Heart left ventricle (tissue), 16 donors: ENCODE measurements at regions of chr10 and their contacts with region 1.

Region 1: DNA sequence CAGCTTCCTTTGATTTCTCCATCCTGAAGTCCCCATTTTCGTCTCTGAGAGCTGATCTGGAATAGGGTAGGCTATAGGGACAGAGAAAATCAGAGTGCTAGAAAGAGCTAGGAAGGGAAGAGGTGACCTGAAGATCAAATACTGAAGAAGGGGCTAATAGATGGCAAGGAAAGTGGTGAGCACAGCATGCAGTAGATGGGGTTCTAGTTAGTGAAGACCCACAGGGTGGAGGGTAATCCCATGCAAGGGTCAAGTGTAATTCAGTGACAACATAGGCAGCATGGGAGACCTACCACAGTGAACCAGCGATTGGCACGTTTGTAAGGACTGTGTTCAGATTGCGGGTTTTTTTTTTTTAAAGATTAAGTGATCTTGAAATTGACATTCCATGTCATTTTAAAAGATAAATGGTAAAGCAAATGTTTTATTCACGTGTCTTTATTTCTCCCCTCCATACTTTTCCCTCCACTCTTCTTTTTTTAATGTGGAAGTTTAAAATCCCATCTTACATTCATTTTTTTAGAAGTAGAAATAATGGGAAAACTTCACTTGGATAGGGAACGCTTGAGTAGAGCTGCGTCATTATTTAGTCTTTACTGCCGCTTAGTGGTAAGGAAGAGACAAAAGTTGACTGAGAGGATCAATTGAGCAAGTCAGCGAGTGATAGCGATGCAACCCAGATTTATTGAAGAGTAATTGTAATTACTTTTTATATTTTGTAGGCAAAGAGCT is 21.0 kb upstream of the ABI1 start:
- DNase-seq: no peak
- ATAC-seq: peak in 3 of 4 donors; percentile 80 to 84 (median 82)
- H3K4me3 ChIP-seq: no peak overlapping the region
- H3K27ac ChIP-seq: no peak overlapping the region
- H3K4me1 ChIP-seq: no peaks in the 10 kb centered on the region
- H3K27me3 ChIP-seq: peaks cover 0 to 42% (median 12%) of the 10 kb centered on the region in 9 donors
- CTCF ChIP-seq: peak; percentile 31 to 78 (median 68)
- POLR2A ChIP-seq: no peak

Region 2: DNA sequence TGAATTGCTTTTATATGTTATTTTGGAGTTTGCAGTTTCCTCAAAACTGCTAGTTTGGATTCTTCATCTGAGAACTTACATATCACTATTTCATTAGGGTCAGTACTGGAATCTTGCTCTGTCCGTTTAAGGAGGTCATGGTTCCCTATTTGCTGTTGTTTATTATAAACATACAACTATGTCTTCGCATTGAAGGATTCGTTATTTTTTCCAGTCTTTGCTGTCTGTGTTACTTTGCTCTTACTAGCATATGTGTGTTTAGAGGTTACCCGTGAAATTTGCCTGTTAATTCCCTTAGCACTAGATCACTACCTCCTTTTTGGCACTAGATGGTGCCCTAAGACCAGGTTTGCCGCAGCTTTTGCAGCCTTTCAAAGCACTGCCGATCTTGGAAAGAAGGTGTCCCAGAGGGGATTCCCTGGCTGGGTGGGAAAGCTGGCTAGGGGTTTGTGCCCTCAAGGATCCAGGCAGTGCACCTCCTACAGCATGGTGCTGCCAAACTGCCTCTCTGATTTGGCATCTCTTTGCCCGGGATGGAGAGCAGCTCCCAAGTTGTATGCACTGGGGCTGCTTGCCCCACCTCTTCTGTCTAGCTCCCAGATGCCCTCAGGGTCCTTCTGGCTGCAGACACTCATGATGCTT is 546.7 kb before region 1 on chr10:
- intact Hi-C with region 1: loop called in 2 of 10 experiments (anchors 5 to 10 kb)
- DNase-seq: peak in 4 of 5 donors; percentile 19 to 33 (median 26)
- ATAC-seq: peak; percentile 48 to 79 (median 56)
- H3K4me3 ChIP-seq: peak overlapping the region in 3 of 12 donors; percentile 26 to 49 (median 32)
- H3K27ac ChIP-seq: no peak overlapping the region
- H3K4me1 ChIP-seq: no peaks in the 10 kb centered on the region
- H3K27me3 ChIP-seq: no peaks in the 10 kb centered on the region
- CTCF ChIP-seq: peak; percentile 32 to 71 (median 58)
- POLR2A ChIP-seq: no peak

Region 3: GRCh38 chr10:26612151-26612915 is 269.4 kb before region 1 on chr10:
- intact Hi-C with region 1: loop called in 2 of 10 experiments (anchors 10 kb)
- DNase-seq: no peak
- ATAC-seq: no peak
- H3K4me3 ChIP-seq: no peak overlapping the region
- H3K27ac ChIP-seq: no peak overlapping the region
- H3K4me1 ChIP-seq: no peaks in the 10 kb centered on the region
- H3K27me3 ChIP-seq: peaks cover 0 to 4% (median 0%) of the 10 kb centered on the region in 9 donors
- CTCF ChIP-seq: no peak
- POLR2A ChIP-seq: no peak

Region 4: DNA sequence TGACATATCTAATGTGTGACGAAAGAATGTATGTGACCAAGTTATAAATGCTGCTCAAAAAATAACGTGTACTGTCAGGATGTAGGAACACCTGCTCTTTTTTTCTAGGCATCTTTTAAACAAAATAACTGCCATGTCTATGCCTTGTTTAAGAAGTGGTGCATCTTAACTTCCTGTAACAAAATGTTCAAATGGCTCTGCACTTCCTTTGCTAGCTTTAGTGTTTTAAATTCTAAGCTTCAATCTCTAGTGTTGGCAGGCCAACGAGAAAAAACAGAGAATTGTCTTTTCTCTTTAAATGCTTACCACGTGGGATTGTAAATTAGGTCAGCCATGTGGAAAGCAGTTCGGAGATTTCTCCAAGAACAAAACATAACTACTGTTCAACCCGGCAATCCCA is 198.8 kb before region 1 on chr10:
- intact Hi-C with region 1: loop called in 7 of 10 experiments (anchors 2 to 5 kb)
- DNase-seq: no peak
- ATAC-seq: no peak
- H3K4me3 ChIP-seq: no peak overlapping the region
- H3K27ac ChIP-seq: no peak overlapping the region
- H3K4me1 ChIP-seq: peaks cover 0 to 3% (median 0%) of the 10 kb centered on the region in 12 donors
- H3K27me3 ChIP-seq: peaks cover 0 to 21% (median 0%) of the 10 kb centered on the region in 9 donors
- CTCF ChIP-seq: no peak
- POLR2A ChIP-seq: no peak

Region 5: GRCh38 chr10:26689399-26689798 is 192.4 kb before region 1 on chr10:
- intact Hi-C with region 1: loop called in 7 of 10 experiments (anchors 2 to 5 kb)
- DNase-seq: no peak
- ATAC-seq: no peak
- H3K4me3 ChIP-seq: no peak overlapping the region
- H3K27ac ChIP-seq: no peak overlapping the region
- H3K4me1 ChIP-seq: peaks cover 0 to 3% (median 0%) of the 10 kb centered on the region in 12 donors
- H3K27me3 ChIP-seq: peaks cover 0 to 24% (median 7%) of the 10 kb centered on the region in 9 donors
- CTCF ChIP-seq: no peak
- POLR2A ChIP-seq: no peak

Region 6: DNA sequence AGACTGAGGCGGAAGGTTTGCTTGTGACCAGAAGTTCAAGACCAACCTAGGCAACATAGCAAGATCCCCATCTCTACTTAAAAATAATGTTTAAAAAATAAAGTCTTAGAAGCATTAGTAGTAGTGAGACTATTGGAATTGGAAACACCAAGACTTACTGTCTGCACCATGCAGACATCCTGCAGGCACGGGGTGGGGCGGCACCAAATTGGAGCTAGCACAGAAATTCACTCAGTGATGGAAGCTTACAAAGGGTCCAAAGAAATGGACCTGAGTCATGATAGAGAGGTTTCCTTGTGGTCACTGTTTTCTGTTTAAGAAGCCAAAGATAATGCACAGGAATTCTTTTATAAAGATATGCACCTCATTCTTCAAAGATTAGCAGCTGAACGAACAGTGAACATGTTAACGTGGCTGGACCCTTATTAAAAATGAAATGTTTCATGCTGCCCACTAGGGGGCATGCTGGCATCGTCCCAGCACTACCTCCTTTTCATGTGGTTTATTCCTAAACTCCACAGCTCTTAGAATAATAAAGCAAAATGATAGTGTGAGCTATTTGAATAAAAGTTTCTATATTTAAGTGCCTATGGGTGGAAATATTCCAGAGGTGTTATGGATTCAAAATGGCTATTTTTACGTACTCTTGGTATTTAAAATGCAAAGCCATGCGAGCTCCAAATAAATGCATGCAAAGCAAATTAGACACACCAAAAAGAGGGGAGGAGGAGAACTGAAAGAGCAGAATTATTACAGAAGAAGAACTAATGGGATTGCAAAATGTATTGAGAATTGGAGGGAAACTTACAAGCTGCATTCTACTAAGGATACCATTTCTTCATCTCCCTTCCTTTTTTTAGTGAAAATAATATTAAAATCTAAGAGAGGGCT is 155.7 kb before region 1 on chr10:
- intact Hi-C with region 1: loop called (anchors 1 to 2 kb)
- DNase-seq: peak; percentile 47 to 72 (median 56)
- ATAC-seq: peak in 2 of 4 donors; percentile 58 to 63
- H3K4me3 ChIP-seq: no peak overlapping the region
- H3K27ac ChIP-seq: no peak overlapping the region
- H3K4me1 ChIP-seq: no peaks in the 10 kb centered on the region
- H3K27me3 ChIP-seq: no peaks in the 10 kb centered on the region
- CTCF ChIP-seq: peak; percentile 68 to 90 (median 85)
- POLR2A ChIP-seq: no peak